Ascending aorta (tissue), 2 donors: ENCODE measurements at regions of chr17 and their contacts with region 1.

Region 1: DNA sequence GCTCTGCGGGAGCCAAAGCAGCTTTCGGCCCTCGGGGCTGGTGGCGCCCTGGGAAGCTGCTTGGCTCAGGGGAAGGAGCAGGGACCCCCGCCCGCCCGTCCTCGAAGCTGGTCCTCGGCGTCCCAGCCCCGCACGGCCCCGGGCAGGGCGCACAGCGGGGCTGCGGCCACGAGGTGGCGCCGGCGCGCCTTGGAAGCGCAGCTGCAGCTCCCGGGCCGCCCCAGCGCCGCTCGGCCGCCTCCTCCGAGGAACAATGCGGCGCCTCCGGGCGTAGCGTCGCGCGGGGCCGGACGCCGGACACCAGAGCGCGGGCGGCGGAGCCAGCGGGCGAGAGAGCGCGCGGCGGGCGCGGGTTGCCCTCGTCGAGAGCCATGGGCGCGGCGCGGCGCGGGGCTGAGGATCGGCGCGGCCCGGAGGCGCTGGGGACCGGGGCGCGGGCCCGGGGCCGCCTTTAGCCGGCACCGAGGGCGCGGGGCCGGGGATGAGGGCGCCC is at the start of gene MGAT5B:
- DNase-seq: peak in 1 of 2 donors; percentile 81
- H3K4me3 ChIP-seq: peak within 1 kb of the TSS; percentile 40 to 57
- H3K27ac ChIP-seq: no peak within 1 kb of the TSS
- H3K4me1 ChIP-seq: peaks cover 0 to 12% of the 10 kb centered on the region in 2 donors
- H3K27me3 ChIP-seq: peaks cover 15% of the 10 kb centered on the region
- CTCF ChIP-seq: peak; percentile 35 to 97 (median 68)
- total RNA-seq, gene MGAT5B: not detected

Region 2: DNA sequence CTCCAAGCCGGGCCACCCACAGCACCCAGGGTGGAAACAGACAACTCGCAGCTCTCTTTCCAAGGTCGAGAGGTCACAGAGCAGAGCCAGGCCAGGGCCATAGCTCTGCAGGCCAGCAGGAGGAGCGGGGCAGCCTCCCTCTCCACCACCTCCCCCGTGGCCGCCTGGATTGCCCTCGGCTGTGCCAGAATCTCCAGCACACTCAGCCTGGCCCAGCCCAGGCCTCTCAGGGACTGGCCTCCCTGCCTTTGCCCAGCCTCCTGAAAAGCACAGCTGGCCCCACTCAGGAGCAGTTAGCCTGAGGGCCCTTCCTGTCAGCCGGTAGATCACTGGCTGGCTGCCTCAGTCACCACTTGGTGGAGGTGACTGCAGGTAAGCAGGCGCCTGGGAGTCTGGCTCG is 186.7 kb after region 1 on chr17:
- intact Hi-C with region 1: loop called (anchors 2 kb)
- DNase-seq: no peak
- H3K4me3 ChIP-seq: no peak overlapping the region
- H3K27ac ChIP-seq: no peak overlapping the region
- H3K4me1 ChIP-seq: no peaks in the 10 kb centered on the region
- H3K27me3 ChIP-seq: peaks cover 6% of the 10 kb centered on the region
- CTCF ChIP-seq: no peak

Region 3: GRCh38 chr17:77066165-77066564 is 197.9 kb after region 1 on chr17:
- intact Hi-C with region 1: loop called (anchors 1 kb)
- DNase-seq: no peak
- H3K4me3 ChIP-seq: no peak overlapping the region
- H3K27ac ChIP-seq: no peak overlapping the region
- H3K4me1 ChIP-seq: no peaks in the 10 kb centered on the region
- H3K27me3 ChIP-seq: peaks cover 5% of the 10 kb centered on the region
- CTCF ChIP-seq: no peak

Region 4: GRCh38 chr17:77247048-77247541 is 378.9 kb after region 1 on chr17:
- intact Hi-C with region 1: loop called (anchors 10 kb)
- DNase-seq: peak in 1 of 2 donors; percentile 87
- H3K4me3 ChIP-seq: peak overlapping the region; percentile 62 to 71
- H3K27ac ChIP-seq: peak overlapping the region in 1 of 2 donors; percentile 36
- H3K4me1 ChIP-seq: peaks cover 5 to 8% of the 10 kb centered on the region in 2 donors
- H3K27me3 ChIP-seq: no peaks in the 10 kb centered on the region
- CTCF ChIP-seq: peak; percentile 98 to 100 (median 99)